ENCODE measurements at regions of chr11 and their contacts with region 1.

Region 1: GRCh38 chr11:75547580-75548058 is 14.4 kb upstream of the SERPINH1 start:
- DNase-seq: peak; percentile 76 to 85
- H3K4me3 ChIP-seq: no peak overlapping the region
- H3K27ac ChIP-seq: peak overlapping the region; percentile 34 to 70
- H3K4me1 ChIP-seq: peaks cover 0 to 4% of the 10 kb centered on the region in 2 donors
- H3K27me3 ChIP-seq: no peaks in the 10 kb centered on the region
- CTCF ChIP-seq: peak; percentile 93 to 96 (median 94)
- POLR2A ChIP-seq: peak in 1 of 2 donors; percentile 10

Region 2: GRCh38 chr11:75204685-75205563 is 342.7 kb before region 1 on chr11:
- intact Hi-C with region 1: no loop called
- DNase-seq: peak; percentile 71 to 72
- H3K4me3 ChIP-seq: no peak overlapping the region
- H3K27ac ChIP-seq: no peak overlapping the region
- H3K4me1 ChIP-seq: no peaks in the 10 kb centered on the region
- H3K27me3 ChIP-seq: no peaks in the 10 kb centered on the region
- CTCF ChIP-seq: peak; percentile 51 to 86 (median 76)
- POLR2A ChIP-seq: no peak

Region 3: DNA sequence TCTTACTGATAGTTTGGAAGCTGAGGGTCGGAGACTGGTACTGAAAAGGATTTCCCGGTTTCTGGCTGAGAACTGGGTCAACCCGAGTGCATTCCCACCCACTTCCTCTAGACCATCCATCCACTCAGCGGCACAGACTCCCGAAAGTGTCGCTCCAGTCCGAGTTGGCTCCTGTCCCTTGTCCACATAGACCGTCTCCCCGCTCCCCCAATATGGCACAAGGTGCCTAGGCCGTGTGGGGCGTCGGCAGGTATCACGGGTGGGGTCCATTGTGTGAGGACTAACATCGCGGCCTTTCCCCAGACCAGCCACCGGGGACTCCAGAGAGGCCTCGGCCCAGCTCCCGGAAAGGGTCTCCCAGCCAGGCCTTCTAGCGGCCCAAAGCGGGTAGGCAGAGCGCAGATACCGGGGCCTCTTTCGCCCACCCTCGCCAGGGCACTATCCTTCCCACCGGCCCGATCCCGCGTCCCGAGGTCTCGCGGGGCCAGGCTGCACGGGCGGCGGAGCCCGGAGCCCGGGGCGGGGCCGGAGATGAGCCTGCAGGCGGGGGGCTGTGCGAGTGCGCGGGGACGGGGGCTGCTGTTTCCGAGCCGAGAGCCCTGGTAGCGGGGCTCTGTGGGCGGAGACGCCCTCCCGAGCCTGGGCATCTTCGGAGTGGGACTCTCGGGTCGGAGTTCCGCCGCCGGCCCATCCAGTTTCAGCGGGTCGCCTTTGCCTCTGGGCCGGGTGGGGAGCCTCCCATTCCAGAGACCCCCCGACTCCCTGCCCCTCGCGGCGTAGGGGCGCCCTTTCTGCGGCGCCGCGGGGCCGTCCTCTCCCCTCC is 35.5 kb after region 1 on chr11:
- intact Hi-C with region 1: loop called (anchors 5 kb)
- DNase-seq: peak; percentile 77 to 80
- H3K4me3 ChIP-seq: peak overlapping the region; percentile 29 to 72
- H3K27ac ChIP-seq: peak overlapping the region; percentile 90 to 99
- H3K4me1 ChIP-seq: peaks cover 0 to 4% of the 10 kb centered on the region in 2 donors
- H3K27me3 ChIP-seq: no peaks in the 10 kb centered on the region
- CTCF ChIP-seq: peak in 1 of 4 experiments; percentile 50
- POLR2A ChIP-seq: peak; percentile 64 to 81

Region 4: GRCh38 chr11:75597636-75598035 is 50.0 kb after region 1 on chr11:
- intact Hi-C with region 1: no loop called
- DNase-seq: no peak
- H3K4me3 ChIP-seq: no peak overlapping the region
- H3K27ac ChIP-seq: no peak overlapping the region
- H3K4me1 ChIP-seq: no peaks in the 10 kb centered on the region
- H3K27me3 ChIP-seq: no peaks in the 10 kb centered on the region
- CTCF ChIP-seq: no peak
- POLR2A ChIP-seq: no peak

Region 5: GRCh38 chr11:75639762-75640181 is 92.2 kb after region 1 on chr11:
- intact Hi-C with region 1: no loop called
- DNase-seq: peak; percentile 40 to 64
- H3K4me3 ChIP-seq: no peak overlapping the region
- H3K27ac ChIP-seq: no peak overlapping the region
- H3K4me1 ChIP-seq: peaks cover 0 to 7% of the 10 kb centered on the region in 2 donors
- H3K27me3 ChIP-seq: no peaks in the 10 kb centered on the region
- CTCF ChIP-seq: no peak
- POLR2A ChIP-seq: no peak

Measured in uterus (tissue), 4 donors.